ENCODE measurements at regions of chr9 and their contacts with region 1.

Region 1: GRCh38 chr9:113221003-113221799 is at the starts of genes FKBP15 and SLC31A1:
- DNase-seq: peak; percentile 95 to 98 (median 97)
- H3K4me3 ChIP-seq: peak within 1 kb of the TSS; percentile 89 to 91
- H3K4me3 Mint-ChIP-seq: peak within 1 kb of the TSS; percentile 92 to 98 (median 96)
- H3K27ac ChIP-seq: peak within 1 kb of the TSS; percentile 90
- H3K27ac Mint-ChIP-seq: peak within 1 kb of the TSS; percentile 91 to 98 (median 96)
- H3K4me1 ChIP-seq: peaks cover 34% of the 10 kb centered on the region
- H3K4me1 Mint-ChIP-seq: peaks cover 28 to 48% (median 38%) of the 10 kb centered on the region in 4 donors
- H3K27me3 ChIP-seq: no peaks in the 10 kb centered on the region
- H3K27me3 Mint-ChIP-seq: no peaks in the 10 kb centered on the region
- total RNA-seq, gene FKBP15: 34.3 to 34.9 TPM
- total RNA-seq, gene SLC31A1: 4.1 to 4.2 TPM

Region 2: DNA sequence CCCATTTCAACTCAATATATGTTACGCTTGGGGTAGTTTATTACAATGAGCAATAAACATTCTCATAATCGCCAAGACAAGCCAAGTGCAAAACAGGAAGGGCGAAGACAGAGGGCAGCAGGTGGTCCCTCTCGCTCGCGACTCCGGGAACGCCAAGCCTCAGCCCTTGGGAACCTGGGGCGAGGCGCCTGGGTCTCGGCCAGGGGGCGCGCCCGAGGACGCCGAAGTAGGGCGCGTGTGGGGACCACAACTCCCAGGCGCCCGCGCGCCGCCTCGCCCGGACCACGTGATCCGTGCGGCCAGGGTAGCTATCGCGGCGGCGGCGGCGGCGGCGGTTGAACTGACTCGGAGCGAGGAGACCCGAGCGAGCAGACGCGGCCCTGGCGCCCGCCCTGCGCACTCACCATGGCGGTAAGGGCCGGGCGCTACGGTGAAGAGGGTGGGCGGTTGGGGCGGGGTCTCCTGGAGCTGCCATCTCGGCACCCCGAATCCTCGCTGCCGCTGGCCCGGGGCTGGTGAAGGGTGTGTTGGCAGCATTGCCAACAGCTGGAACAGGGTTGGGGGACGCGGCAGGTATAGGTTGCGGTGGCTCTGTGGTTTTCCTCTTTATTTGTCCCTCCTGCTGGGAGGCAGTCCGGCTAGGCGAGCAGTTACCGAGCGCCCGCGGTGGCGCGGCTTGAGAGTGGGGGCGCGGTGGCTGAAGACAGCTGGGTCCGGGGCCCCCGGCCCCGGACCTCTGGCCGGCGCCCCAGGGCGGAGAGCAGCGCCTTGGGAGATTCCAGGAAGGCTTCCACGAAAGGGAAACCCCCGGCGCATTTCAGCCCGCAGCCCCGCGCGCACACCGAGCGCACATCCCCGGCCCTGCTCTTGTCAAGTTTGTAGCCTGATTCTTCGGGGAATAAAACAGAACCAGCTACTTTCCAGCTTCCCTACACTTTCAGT is 70.3 kb before region 1 on chr9 and contains the start of gene SLC31A2:
- CTCF ChIA-PET with region 1: interaction called, 4 read pairs
- POLR2A ChIA-PET with region 1: interaction called, 8 read pairs
- intact Hi-C with region 1: loop called (anchors 1 kb)
- DNase-seq: peak; percentile 80 to 85 (median 81)
- H3K4me3 ChIP-seq: peak within 1 kb of the TSS; percentile 47 to 76
- H3K4me3 Mint-ChIP-seq: peak within 1 kb of the TSS; percentile 83 to 87 (median 86)
- H3K27ac ChIP-seq: peak within 1 kb of the TSS; percentile 50
- H3K27ac Mint-ChIP-seq: peak within 1 kb of the TSS; percentile 51 to 84 (median 76)
- H3K4me1 ChIP-seq: peaks cover 29% of the 10 kb centered on the region
- H3K4me1 Mint-ChIP-seq: peaks cover 12 to 40% (median 30%) of the 10 kb centered on the region in 4 donors
- H3K27me3 ChIP-seq: no peaks in the 10 kb centered on the region
- H3K27me3 Mint-ChIP-seq: peaks cover 2 to 6% of the 10 kb centered on the region in 2 donors
- total RNA-seq, gene SLC31A2: 5.3 to 6.1 TPM

Region 3: DNA sequence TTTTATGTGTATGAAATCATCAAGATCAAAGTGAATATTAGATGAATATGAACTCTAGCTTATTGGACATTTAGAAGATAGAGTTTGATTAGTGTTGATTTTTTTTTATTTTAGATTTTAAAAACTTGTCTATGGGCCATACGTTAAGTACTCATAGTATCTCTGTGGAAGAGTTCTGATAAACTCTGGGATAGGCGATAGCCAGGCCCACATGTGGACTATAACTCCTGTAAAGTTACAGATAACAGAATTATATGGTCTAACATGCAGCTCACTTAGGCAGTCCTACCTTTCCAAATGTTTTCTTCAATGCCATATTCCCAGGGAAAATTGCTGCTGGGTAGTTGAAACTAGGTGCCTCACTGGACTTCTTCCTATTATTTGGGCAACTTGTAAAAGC is 10.5 kb after region 1 on chr9:
- CTCF ChIA-PET with region 1: no interaction called
- POLR2A ChIA-PET with region 1: interaction called, 22 read pairs
- intact Hi-C with region 1: no loop called
- DNase-seq: no peak
- H3K4me3 ChIP-seq: no peak overlapping the region
- H3K4me3 Mint-ChIP-seq: no peak overlapping the region
- H3K27ac ChIP-seq: no peak overlapping the region
- H3K27ac Mint-ChIP-seq: peak overlapping the region in 1 of 7 donors; percentile 69
- H3K4me1 ChIP-seq: peaks cover 19% of the 10 kb centered on the region
- H3K4me1 Mint-ChIP-seq: peaks cover 13 to 24% (median 21%) of the 10 kb centered on the region in 4 donors
- H3K27me3 ChIP-seq: no peaks in the 10 kb centered on the region
- H3K27me3 Mint-ChIP-seq: no peaks in the 10 kb centered on the region

Region 4: DNA sequence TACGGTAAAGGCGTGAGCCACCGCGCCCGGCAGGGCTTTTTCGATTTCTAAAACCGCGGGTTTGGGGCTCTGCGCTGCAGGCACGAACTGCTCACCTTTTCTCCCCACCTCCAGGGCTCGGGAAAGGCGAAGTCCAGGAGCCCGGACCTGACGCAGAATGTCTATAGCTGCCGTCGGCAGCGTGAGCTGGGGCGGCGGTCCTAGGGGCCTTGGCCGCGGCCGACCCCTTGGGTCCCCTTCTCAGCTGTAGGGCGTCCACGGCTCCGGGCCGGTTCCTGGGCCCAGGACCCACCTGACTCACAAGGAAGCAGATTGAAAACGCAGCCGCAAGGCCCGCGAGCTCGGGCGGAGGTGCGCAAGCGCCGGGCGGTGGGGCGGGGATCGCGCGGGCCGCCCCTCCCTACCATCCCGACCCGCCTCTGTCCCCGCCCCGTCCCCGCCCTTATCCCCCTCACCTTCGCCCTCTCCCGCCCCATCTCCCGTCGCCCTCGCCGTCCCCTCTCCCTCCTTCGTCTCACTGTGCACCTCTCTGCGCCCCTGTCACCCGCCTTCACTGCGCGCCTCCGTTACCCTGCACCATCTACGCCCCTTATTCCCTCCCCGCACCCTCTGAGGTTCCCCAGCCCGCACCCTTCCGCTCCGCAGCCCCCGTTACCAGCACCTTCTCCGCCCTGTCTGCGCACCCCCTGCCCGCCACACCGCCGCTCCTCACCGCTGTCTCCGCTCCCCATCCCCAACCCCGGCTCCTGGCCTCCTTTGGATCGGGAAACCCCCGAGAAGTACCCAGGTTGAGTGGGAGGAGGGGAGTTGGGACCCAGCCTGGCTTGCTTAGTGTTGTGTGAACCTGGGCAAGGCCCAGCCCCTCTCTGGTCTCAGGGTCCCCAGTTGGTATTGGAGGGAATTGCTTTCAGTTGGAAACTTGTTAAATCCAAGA is 155.7 kb after region 1 on chr9 and contains the start of gene HDHD3:
- CTCF ChIA-PET with region 1: no interaction called
- POLR2A ChIA-PET with region 1: interaction called, 6 read pairs
- intact Hi-C with region 1: loop called (anchors 10 kb)
- DNase-seq: peak; percentile 78 to 81 (median 80)
- H3K4me3 ChIP-seq: peak within 1 kb of the TSS; percentile 57 to 92
- H3K4me3 Mint-ChIP-seq: peak within 1 kb of the TSS; percentile 88 to 93 (median 90)
- H3K27ac ChIP-seq: peak within 1 kb of the TSS; percentile 66
- H3K27ac Mint-ChIP-seq: peak within 1 kb of the TSS; percentile 74 to 96 (median 89)
- H3K4me1 ChIP-seq: peaks cover 13% of the 10 kb centered on the region
- H3K4me1 Mint-ChIP-seq: peaks cover 12 to 23% (median 17%) of the 10 kb centered on the region in 4 donors
- H3K27me3 ChIP-seq: no peaks in the 10 kb centered on the region
- H3K27me3 Mint-ChIP-seq: no peaks in the 10 kb centered on the region
- total RNA-seq, gene HDHD3: 29.9 to 32.8 TPM

Region 5: GRCh38 chr9:113695901-113696300 is 474.7 kb after region 1 on chr9:
- CTCF ChIA-PET with region 1: no interaction called
- POLR2A ChIA-PET with region 1: no interaction called
- intact Hi-C with region 1: no loop called
- DNase-seq: no peak
- H3K4me3 ChIP-seq: no peak overlapping the region
- H3K4me3 Mint-ChIP-seq: peak overlapping the region in 5 of 8 donors; percentile 13 to 52 (median 32)
- H3K27ac ChIP-seq: no peak overlapping the region
- H3K27ac Mint-ChIP-seq: peak overlapping the region in 1 of 7 donors; percentile 1
- H3K4me1 ChIP-seq: peaks cover 24% of the 10 kb centered on the region
- H3K4me1 Mint-ChIP-seq: peaks cover 19 to 33% (median 25%) of the 10 kb centered on the region in 4 donors
- H3K27me3 ChIP-seq: no peaks in the 10 kb centered on the region
- H3K27me3 Mint-ChIP-seq: peaks cover 16 to 20% of the 10 kb centered on the region in 2 donors

Measured in CD4-positive, alpha-beta memory T cell (primary cell).